Gastrocnemius medialis (tissue), 4 donors: ENCODE measurements at regions of chr3 and their contacts with region 1.

Region 1: DNA sequence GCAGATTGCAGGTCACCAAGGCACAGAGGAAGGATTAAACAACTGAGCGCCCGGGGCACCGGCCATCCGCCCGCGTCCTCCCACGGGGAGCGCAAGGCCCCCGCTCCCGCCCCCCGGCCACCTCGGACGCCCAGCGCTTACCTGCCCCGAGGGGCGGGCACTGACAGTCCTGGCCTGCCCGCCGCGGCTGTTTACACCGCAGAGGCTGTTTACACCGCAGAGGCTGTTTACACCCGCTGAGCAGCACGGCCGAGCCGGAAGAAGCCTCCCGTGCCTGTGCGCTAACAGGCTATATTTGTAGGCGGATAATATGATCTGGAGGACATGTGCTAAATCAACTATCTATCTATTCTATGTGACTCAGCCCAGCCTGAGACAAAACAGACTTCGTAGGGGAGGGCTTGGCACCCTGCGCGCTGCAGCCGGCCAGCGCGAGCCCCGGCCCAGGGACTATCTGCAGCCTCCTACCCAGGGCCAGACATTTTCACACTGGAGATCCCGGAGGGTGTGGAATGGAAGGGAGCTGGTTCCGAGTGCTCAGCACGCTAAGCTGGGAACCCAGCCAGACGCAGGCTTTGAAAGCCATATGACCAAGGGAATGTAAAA is at the start of gene LRRC2:
- DNase-seq: peak; percentile 92
- ATAC-seq: peak; percentile 71 to 80
- H3K4me3 ChIP-seq: peak within 1 kb of the TSS; percentile 68 to 86 (median 76)
- H3K27ac ChIP-seq: peak within 1 kb of the TSS; percentile 94 to 99 (median 97)
- H3K4me1 ChIP-seq: peaks cover 28 to 31% of the 10 kb centered on the region in 2 donors
- H3K27me3 ChIP-seq: no peaks in the 10 kb centered on the region
- CTCF ChIP-seq: no peak
- POLR2A ChIP-seq: peak; percentile 97
- total RNA-seq, gene LRRC2: 72.7 to 103 (median 92.1) TPM

Region 2: DNA sequence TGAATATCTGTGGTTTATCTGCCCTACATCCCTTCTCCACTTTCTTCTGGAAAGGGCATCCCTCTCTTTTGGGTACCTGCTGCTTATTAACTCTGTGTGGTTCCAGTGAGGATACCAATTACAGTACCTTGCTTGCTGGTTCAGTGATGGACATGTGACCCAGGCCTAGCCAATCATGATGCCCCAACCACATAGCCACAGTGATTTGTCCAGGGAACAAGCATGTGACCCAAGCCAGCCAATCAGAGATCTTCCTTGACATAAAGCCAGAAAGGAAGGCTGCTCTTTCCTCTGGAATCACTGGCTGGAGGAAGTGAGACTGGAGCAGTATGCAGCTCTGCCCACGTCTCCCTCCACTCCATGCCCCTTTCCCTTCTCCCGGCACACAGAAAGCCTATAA is 1329.2 kb before region 1 on chr3:
- in situ Hi-C with region 1: no loop called
- intact Hi-C with region 1: no loop called
- DNase-seq: no peak
- ATAC-seq: no peak
- H3K4me3 ChIP-seq: no peak overlapping the region
- H3K27ac ChIP-seq: no peak overlapping the region
- H3K4me1 ChIP-seq: no peaks in the 10 kb centered on the region
- H3K27me3 ChIP-seq: peaks cover 0 to 2% (median 0%) of the 10 kb centered on the region in 3 donors
- CTCF ChIP-seq: no peak
- POLR2A ChIP-seq: no peak

Region 3: GRCh38 chr3:45986303-45986982 is 579.7 kb before region 1 on chr3:
- in situ Hi-C with region 1: no loop called
- intact Hi-C with region 1: loop called (anchors 10 kb)
- DNase-seq: peak; percentile 75 to 80
- ATAC-seq: peak; percentile 45 to 48
- H3K4me3 ChIP-seq: peak overlapping the region in 1 of 4 donors; percentile 21
- H3K27ac ChIP-seq: peak overlapping the region; percentile 97 to 100 (median 100)
- H3K4me1 ChIP-seq: peaks cover 99 to 100% of the 10 kb centered on the region in 2 donors
- H3K27me3 ChIP-seq: no peaks in the 10 kb centered on the region
- CTCF ChIP-seq: no peak
- POLR2A ChIP-seq: peak; percentile 35 to 79

Region 4: DNA sequence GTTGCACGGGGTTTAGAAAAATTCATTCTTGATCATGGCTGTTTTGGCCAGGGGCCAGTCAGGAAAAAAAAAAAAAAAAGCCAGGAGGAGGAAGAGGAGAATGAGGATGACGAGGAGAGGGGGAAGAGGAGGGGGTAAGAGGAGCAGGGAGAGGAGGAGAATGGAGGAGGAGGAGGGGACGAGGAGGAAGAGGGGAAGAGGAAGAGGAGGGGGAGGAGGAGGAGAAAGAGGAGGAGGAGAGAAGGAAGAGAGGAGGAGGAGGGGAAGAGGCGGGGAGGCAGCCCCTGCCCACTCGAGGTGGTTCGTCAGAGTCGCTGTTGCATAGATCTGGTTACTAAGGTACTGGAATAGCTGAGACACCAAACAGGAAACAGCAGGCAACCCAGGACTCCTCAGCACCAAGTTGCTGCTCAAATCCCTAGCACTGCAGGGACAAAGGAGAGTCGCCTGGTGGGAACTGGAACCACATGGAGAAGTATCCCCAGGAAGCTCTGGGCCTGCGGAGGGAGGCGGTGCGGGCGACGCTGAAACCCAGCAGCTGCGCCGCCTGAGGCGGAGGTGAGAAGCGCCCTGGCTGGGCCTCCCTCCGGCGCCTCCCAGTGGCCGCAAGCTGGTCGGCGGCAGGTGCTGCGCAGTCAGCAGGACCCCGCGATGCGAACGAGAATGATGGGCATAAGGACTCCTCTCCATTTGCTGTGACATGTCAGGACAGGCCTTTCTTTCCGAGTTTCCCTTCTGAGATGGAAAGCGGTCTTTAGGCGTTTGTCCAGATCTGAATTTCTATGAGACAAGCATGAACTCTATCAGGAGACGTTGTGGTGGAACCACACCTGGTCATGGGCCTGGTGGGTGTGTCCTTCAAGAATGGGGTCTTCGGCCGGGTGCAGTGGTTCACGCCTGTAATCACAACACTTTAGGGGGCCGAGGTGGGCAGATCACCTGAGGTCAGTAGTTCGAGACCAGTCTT is 63.7 kb after region 1 on chr3:
- in situ Hi-C with region 1: no loop called
- intact Hi-C with region 1: loop called (anchors 1 kb)
- DNase-seq: peak; percentile 60 to 75
- ATAC-seq: peak; percentile 83 to 91
- H3K4me3 ChIP-seq: peak overlapping the region; percentile 18 to 42 (median 30)
- H3K27ac ChIP-seq: peak overlapping the region; percentile 64 to 80 (median 73)
- H3K4me1 ChIP-seq: peaks cover 13 to 19% of the 10 kb centered on the region in 2 donors
- H3K27me3 ChIP-seq: no peaks in the 10 kb centered on the region
- CTCF ChIP-seq: peak; percentile 90 to 100 (median 99)
- POLR2A ChIP-seq: no peak

Region 5: GRCh38 chr3:46866720-46867549 is 300.8 kb after region 1 on chr3:
- in situ Hi-C with region 1: no loop called
- intact Hi-C with region 1: loop called (anchors 10 kb)
- DNase-seq: peak; percentile 41 to 68
- ATAC-seq: peak; percentile 40 to 56
- H3K4me3 ChIP-seq: peak overlapping the region in 2 of 4 donors; percentile 7 to 19
- H3K27ac ChIP-seq: peak overlapping the region; percentile 68 to 89 (median 72)
- H3K4me1 ChIP-seq: peaks cover 34 to 36% of the 10 kb centered on the region in 2 donors
- H3K27me3 ChIP-seq: no peaks in the 10 kb centered on the region
- CTCF ChIP-seq: peak; percentile 86 to 95 (median 91)
- POLR2A ChIP-seq: no peak

Region 6: GRCh38 chr3:48064292-48064829 is 1498.2 kb after region 1 on chr3:
- in situ Hi-C with region 1: no loop called
- intact Hi-C with region 1: no loop called
- DNase-seq: no peak
- ATAC-seq: no peak
- H3K4me3 ChIP-seq: no peak overlapping the region
- H3K27ac ChIP-seq: peak overlapping the region in 3 of 4 donors; percentile 2 to 59 (median 40)
- H3K4me1 ChIP-seq: peaks cover 48 to 58% of the 10 kb centered on the region in 2 donors
- H3K27me3 ChIP-seq: no peaks in the 10 kb centered on the region
- CTCF ChIP-seq: no peak
- POLR2A ChIP-seq: no peak